ENCODE measurements at regions of chr7 and their contacts with region 1.

Region 1: DNA sequence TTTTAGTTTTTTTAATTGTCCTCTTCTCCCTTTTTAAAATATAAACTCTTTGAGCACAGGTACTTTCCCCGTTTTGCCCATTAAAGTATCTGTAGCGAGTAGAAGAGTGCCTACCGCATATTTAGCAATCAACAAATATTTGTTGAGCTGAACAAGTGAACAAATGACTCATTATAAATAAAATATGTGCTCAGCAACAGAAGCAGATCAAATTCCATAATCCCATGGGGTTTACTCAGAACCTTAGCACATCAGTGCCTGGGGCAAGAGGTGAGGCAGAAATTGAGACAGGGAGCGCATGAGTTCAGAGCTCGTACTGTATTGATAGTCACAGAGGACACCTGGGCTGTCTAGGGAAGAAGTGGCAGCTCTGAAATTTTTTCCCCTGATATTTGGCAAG is 161.0 kb downstream of the SEM1 start:
- DNase-seq: peak; percentile 97
- H3K4me3 Mint-ChIP-seq: peak overlapping the region; percentile 35
- H3K27ac Mint-ChIP-seq: peak overlapping the region; percentile 95
- H3K4me1 Mint-ChIP-seq: peaks cover 34% of the 10 kb centered on the region
- H3K27me3 Mint-ChIP-seq: no peaks in the 10 kb centered on the region
- CTCF ChIP-seq: no peak

Region 2: DNA sequence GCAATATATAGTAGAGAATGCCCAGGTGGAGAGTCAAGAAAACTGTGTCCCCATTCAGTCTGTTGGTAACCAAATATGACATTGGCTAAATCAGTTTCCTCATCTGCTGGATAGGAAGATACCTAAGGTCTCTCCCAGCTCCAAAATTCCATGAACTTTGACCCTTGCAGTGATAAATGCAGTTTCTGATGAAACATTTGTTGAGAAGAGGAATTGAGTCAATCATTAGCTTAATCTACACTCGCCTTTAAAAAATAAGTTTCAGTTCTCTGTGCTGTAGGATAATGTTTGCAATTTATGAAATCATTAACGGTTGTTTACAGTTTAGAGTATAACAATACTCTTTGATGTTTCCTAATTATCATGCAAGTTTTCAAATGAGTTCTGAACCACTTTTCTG is 188.8 kb before region 1 on chr7:
- CTCF ChIA-PET with region 1: no interaction called
- POLR2A ChIA-PET with region 1: no interaction called
- intact Hi-C with region 1: no loop called
- DNase-seq: no peak
- H3K4me3 Mint-ChIP-seq: no peak overlapping the region
- H3K27ac Mint-ChIP-seq: no peak overlapping the region
- H3K4me1 Mint-ChIP-seq: no peaks in the 10 kb centered on the region
- H3K27me3 Mint-ChIP-seq: no peaks in the 10 kb centered on the region
- CTCF ChIP-seq: no peak

Region 3: GRCh38 chr7:96508371-96508770 is 40.3 kb before region 1 on chr7:
- CTCF ChIA-PET with region 1: interaction called, 3 read pairs
- POLR2A ChIA-PET with region 1: interaction called, 25 read pairs
- intact Hi-C with region 1: no loop called
- DNase-seq: peak; percentile 89
- H3K4me3 Mint-ChIP-seq: no peak overlapping the region
- H3K27ac Mint-ChIP-seq: no peak overlapping the region
- H3K4me1 Mint-ChIP-seq: peaks cover 13% of the 10 kb centered on the region
- H3K27me3 Mint-ChIP-seq: peaks cover 50% of the 10 kb centered on the region
- CTCF ChIP-seq: no peak

Region 4: DNA sequence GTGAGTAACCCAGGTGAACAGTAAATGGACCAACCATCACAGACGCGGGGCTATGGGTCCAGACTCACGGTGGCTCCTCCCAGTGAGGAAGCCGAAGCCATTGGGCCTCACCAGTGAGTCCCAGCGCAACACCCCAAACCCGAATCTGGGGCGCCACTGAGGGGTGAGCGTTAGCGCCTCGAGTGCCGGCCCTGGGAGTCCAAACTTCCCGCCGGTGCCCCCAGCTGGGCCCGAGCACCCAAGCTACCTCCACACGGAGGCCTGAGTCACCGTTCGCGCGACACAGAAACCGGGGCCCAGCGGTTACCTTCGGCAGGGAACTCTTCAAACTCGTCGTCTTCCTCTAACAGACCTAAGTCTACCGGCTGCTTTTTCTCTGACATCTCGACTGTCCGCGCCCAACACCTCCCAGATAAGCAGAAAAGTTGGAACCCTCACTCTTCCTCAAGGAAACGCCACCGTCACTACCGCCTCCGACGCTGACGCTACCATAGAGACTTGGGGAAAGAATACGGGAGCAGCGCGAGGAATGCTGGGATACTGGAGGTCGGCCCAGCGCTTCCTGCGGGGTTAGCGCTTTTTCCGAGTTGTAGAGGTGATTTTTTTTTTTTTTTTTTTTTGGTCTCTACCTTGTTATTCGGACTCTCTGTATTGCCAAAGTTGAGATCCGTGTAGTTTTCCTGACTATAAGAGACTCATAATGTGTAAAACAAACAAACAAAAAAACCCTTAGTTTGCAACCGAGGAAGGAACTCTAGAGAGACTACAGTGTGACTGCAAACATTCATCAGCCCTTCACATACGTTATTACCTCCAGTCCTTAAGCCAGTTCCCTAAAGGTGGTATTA is 160.9 kb after region 1 on chr7 and contains the start of gene SEM1:
- CTCF ChIA-PET with region 1: no interaction called
- POLR2A ChIA-PET with region 1: interaction called, 7 read pairs
- intact Hi-C with region 1: loop called (anchors 5 kb)
- DNase-seq: peak; percentile 86
- H3K4me3 Mint-ChIP-seq: peak within 1 kb of the TSS; percentile 92
- H3K27ac Mint-ChIP-seq: peak within 1 kb of the TSS; percentile 99
- H3K4me1 Mint-ChIP-seq: peaks cover 10% of the 10 kb centered on the region
- H3K27me3 Mint-ChIP-seq: no peaks in the 10 kb centered on the region
- CTCF ChIP-seq: no peak
- total RNA-seq, gene SEM1: 70.3 and 80.2 TPM in 2 replicates